Left cardiac atrium (tissue), 4 donors: ENCODE measurements at regions of chr7 and their contacts with region 1.

Region 1: DNA sequence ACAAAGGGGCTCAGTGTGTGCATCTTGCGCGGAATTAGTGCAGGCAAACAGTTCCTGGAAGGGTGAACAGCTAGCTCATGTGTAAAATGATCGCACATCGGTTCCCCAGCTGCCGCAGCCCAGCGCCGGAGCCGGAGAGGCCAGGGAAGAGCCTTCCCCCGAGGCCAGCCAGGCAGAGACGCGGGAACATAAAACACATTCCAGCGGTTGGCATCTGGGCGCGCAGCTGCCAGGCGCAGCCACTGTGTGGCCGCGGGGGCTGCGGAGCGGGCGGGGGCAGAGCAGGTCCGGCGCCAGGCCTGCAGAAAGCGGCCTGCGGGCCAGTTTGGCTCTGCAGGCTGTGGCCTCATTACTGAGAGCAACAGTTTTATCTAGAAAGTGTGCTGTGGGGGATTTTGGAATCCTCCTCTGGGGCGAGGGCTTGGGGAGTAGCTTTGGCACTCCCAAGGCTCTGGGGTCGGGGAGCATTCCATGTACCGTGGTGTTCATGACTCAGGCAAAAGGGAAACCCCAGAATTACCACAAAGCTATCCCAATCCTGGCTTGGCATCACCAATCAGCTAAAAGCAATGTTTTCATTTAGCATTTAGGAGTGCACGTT is 74.3 kb downstream of the SAMD9 start:
- DNase-seq: no peak
- ATAC-seq: peak; percentile 68 to 82

Region 2: GRCh38 chr7:92682903-92683539 is 360.5 kb before region 1 on chr7:
- intact Hi-C with region 1: loop called in 1 of 2 experiments (anchors 10 kb)
- DNase-seq: no peak
- ATAC-seq: no peak